ENCODE measurements at regions of chr7 and their contacts with region 1.

Region 1: GRCh38 chr7:151432791-151433521 is 7.0 kb downstream of the CRYGN start:
- DNase-seq: peak; percentile 54 to 71 (median 63)
- H3K4me3 ChIP-seq: no peak overlapping the region
- H3K4me3 Mint-ChIP-seq: peak overlapping the region; percentile 46 to 85 (median 64)
- H3K27ac ChIP-seq: peak overlapping the region; percentile 58
- H3K27ac Mint-ChIP-seq: peak overlapping the region; percentile 80 to 94 (median 89)
- H3K4me1 ChIP-seq: peaks cover 63% of the 10 kb centered on the region
- H3K4me1 Mint-ChIP-seq: peaks cover 37 to 64% (median 51%) of the 10 kb centered on the region in 4 donors
- H3K27me3 ChIP-seq: no peaks in the 10 kb centered on the region
- H3K27me3 Mint-ChIP-seq: no peaks in the 10 kb centered on the region

Region 2: DNA sequence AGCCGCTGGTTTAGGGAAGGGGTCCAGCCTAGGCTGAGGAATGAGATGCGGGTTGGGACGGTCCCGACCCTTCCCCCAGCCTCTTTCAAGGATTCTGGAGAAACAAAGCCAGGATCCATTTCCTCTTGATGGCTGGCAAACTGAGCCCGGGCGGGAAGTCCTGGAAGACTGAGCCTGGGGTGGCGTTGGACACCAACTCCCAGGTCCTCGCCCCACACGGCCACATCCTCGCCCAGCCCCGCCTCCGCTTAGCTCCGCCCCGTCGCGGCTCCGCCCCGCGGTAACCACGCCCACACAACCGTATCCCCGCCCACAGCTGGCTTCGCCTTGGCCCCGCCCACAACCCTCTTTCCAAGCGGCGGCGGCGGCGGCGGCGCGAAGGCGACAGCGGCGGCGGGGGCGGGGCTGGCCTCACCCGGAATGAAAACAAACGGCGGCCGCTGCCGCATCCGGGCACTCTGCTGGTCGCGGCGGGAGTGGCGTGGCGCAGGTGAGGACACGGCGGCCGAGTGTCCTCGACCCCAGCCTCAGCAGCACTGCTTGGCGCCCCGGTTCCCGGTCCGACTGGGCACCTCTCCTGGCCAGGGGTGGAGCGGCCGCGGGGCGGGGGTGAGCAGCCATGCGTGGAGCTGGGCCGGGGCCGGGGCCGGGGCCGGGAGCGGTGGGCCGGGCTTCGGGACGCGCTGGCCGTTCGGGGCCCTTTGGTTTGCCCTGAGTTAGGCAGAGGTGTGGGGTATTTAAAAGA is 91.4 kb before region 1 on chr7 and contains the start of gene NUB1:
- CTCF ChIA-PET with region 1: no interaction called
- POLR2A ChIA-PET with region 1: interaction called, 10 read pairs
- intact Hi-C with region 1: no loop called
- DNase-seq: peak; percentile 84 to 94 (median 88)
- H3K4me3 ChIP-seq: peak within 1 kb of the TSS; percentile 80 to 86
- H3K4me3 Mint-ChIP-seq: peak within 1 kb of the TSS; percentile 79 to 91 (median 89)
- H3K27ac ChIP-seq: peak within 1 kb of the TSS; percentile 81
- H3K27ac Mint-ChIP-seq: peak within 1 kb of the TSS; percentile 87 to 97 (median 93)
- H3K4me1 ChIP-seq: peaks cover 28% of the 10 kb centered on the region
- H3K4me1 Mint-ChIP-seq: peaks cover 19 to 42% (median 29%) of the 10 kb centered on the region in 4 donors
- H3K27me3 ChIP-seq: no peaks in the 10 kb centered on the region
- H3K27me3 Mint-ChIP-seq: no peaks in the 10 kb centered on the region
- total RNA-seq, gene NUB1: 116 to 119 TPM

Region 3: GRCh38 chr7:151368136-151368571 is 64.8 kb before region 1 on chr7:
- CTCF ChIA-PET with region 1: interaction called, 8 read pairs
- POLR2A ChIA-PET with region 1: interaction called, 10 read pairs
- intact Hi-C with region 1: loop called (anchors 1 kb)
- DNase-seq: peak; percentile 74 to 81 (median 75)
- H3K4me3 ChIP-seq: no peak overlapping the region
- H3K4me3 Mint-ChIP-seq: peak overlapping the region in 1 of 8 donors; percentile 38
- H3K27ac ChIP-seq: no peak overlapping the region
- H3K27ac Mint-ChIP-seq: peak overlapping the region in 6 of 7 donors; percentile 44 to 92 (median 88)
- H3K4me1 ChIP-seq: peaks cover 10% of the 10 kb centered on the region
- H3K4me1 Mint-ChIP-seq: peaks cover 6 to 16% (median 10%) of the 10 kb centered on the region in 4 donors
- H3K27me3 ChIP-seq: no peaks in the 10 kb centered on the region
- H3K27me3 Mint-ChIP-seq: no peaks in the 10 kb centered on the region

Region 4: DNA sequence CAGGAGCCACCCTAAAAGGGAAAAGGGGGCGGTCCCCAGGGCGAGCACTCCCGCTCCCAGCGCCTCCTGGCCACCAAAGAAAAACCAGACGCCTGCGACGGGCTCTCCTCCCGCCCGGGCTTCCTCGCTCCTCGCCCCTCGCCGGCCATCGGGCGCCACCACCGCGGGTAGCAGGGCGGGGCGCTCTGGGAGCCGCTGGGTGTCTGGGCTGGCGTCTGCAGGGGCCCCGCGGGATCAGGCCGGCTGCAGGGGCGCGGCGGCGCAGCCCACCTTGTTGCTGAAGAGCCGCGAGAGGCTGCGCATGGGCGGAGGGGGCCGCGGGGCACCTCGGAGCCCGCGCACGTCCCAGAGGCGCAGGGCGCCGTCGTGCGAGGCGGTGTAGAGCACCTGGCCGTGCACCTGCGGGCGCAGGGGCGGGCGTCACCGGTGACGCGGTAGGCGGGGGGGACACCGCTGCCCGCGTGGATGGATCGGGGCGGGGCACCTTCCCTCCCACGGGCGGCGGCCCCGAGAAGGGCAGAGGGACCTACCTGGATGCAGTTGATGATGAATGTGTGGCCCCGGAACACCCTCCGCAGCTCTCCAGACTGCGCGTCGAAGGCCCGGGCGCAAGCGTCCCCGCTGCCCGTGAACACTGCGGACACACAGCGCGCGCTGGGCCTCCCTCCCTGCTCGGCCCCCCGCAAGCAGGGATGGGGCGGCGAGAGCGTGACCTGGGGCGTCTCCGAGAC is 51.4 kb before region 1 on chr7:
- CTCF ChIA-PET with region 1: no interaction called
- POLR2A ChIA-PET with region 1: interaction called, 4 read pairs
- intact Hi-C with region 1: loop called (anchors 5 kb)
- DNase-seq: peak; percentile 70 to 85 (median 81)
- H3K4me3 ChIP-seq: peak overlapping the region in 1 of 2 donors; percentile 51
- H3K4me3 Mint-ChIP-seq: peak overlapping the region in 6 of 8 donors; percentile 10 to 87 (median 80)
- H3K27ac ChIP-seq: peak overlapping the region; percentile 60
- H3K27ac Mint-ChIP-seq: peak overlapping the region in 4 of 7 donors; percentile 84 to 96 (median 90)
- H3K4me1 ChIP-seq: peaks cover 16% of the 10 kb centered on the region
- H3K4me1 Mint-ChIP-seq: peaks cover 6 to 19% (median 11%) of the 10 kb centered on the region in 4 donors
- H3K27me3 ChIP-seq: peaks cover 6% of the 10 kb centered on the region
- H3K27me3 Mint-ChIP-seq: peaks cover 2 to 6% of the 10 kb centered on the region in 2 donors

Region 5: GRCh38 chr7:151408839-151409666 is 23.9 kb before region 1 on chr7:
- CTCF ChIA-PET with region 1: interaction called, 4 read pairs
- POLR2A ChIA-PET with region 1: interaction called, 20 read pairs
- intact Hi-C with region 1: loop called (anchors 1 kb)
- DNase-seq: peak; percentile 85 to 95 (median 95)
- H3K4me3 ChIP-seq: peak overlapping the region; percentile 9 to 58
- H3K4me3 Mint-ChIP-seq: peak overlapping the region; percentile 79 to 89 (median 84)
- H3K27ac ChIP-seq: peak overlapping the region; percentile 89
- H3K27ac Mint-ChIP-seq: peak overlapping the region; percentile 81 to 99 (median 99)
- H3K4me1 ChIP-seq: peaks cover 41% of the 10 kb centered on the region
- H3K4me1 Mint-ChIP-seq: peaks cover 20 to 80% (median 32%) of the 10 kb centered on the region in 4 donors
- H3K27me3 ChIP-seq: no peaks in the 10 kb centered on the region
- H3K27me3 Mint-ChIP-seq: peaks cover 1 to 3% of the 10 kb centered on the region in 2 donors

Measured in CD4-positive, alpha-beta memory T cell (primary cell).